ENCODE measurements at regions of chr6 and their contacts with region 1.

Region 1: DNA sequence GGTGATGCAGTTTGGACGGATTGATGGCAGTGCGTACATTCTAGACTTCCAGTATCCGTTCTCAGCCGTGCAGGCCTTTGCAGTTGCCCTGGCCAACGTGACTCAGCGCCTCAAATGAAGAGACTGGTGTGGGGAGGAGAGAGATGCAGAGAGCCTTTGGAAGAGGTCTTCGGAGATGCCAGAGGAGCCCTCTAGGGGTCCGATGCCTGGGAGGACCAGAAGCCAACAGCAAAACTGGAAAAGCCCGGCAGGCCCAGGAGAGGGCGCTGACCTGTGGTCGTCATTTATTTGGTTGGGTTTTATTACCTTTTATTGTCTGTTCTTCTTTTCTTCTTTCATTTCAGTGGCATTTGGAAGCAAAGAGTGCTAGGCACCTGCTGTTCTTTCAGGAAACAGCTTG is 53.3 kb upstream of the TMEM181 start:
- DNase-seq: no peak
- H3K4me3 ChIP-seq: no peak overlapping the region
- H3K27ac ChIP-seq: no peak overlapping the region
- H3K4me1 ChIP-seq: no peaks in the 10 kb centered on the region
- H3K27me3 ChIP-seq: no peaks in the 10 kb centered on the region
- CTCF ChIP-seq: no peak

Region 2: GRCh38 chr6:158559895-158560835 is 53.6 kb after region 1 on chr6 and contains the start of gene TMEM181:
- CTCF ChIA-PET with region 1: no interaction called
- dilution Hi-C with region 1: loop called (anchors 5 kb)
- in situ Hi-C with region 1: no loop called
- intact Hi-C with region 1: no loop called
- DNase-seq: peak; percentile 78
- H3K4me3 ChIP-seq: peak within 1 kb of the TSS; percentile 77 to 96 (median 86)
- H3K27ac ChIP-seq: peak within 1 kb of the TSS; percentile 82
- H3K4me1 ChIP-seq: peaks cover 24% of the 10 kb centered on the region
- H3K27me3 ChIP-seq: no peaks in the 10 kb centered on the region
- CTCF ChIP-seq: no peak
- total RNA-seq, gene TMEM181: 29.8 to 45.3 TPM